GM13976 (cell line): ENCODE measurements at regions of chr1 and their contacts with region 1.

Region 1: GRCh38 chr1:111139956-111140679 is at the starts of genes CEPT1 and DRAM2:
- DNase-seq: peak; percentile 93
- CTCF ChIP-seq: no peak

Region 2: DNA sequence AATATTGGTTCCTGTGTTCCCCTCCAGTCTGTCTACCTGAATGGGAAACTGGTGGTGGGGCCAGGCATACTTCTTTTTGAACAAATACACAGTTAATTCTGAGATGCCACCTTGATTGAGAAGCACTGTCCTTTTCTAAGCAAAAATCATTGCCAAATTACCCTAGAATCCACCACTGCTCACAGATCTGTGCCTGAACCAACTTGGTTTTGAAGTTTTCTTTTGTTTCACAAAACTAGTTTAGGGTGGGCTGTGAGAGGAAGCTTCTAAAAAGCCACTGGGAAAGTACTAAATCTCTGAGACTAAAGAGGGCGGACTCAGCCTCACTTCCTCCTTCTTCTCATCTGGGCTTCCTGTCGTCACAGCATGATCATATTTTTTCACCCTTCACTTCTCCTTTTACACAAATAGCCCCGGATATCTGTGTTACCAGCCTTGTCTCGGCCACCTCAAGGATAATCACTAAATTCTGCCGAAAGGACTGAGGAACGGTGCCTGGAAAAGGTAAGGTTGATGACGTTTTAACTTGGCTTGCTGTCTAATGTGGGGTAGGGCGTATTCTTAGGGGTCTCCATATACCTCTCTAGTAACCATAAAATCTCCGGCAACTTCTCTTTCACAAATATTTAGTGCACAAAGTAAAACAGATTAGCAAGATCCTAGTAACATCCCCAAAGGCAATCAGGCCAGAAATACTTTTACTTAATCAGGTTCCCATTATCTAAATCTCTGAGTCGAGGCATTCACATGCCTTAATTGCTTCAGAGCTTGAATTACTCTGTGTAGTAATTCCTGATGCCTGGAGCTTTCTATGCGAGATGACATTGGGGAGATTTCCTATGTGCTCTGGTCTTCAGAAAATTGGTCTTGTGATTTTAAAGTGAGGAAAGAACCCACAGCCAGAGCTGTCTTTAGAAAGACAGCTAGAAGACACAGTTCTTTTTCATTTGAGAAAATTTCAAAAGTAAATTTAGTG is 267.1 kb before region 1 on chr1 and contains the start of gene CD53:
- in situ Hi-C with region 1: loop called (anchors 10 kb)
- DNase-seq: peak; percentile 40
- CTCF ChIP-seq: no peak